Naive thymus-derived CD8-positive, alpha-beta T cell (primary cell): ENCODE measurements at regions of chr19 and their contacts with region 1.

Region 1: DNA sequence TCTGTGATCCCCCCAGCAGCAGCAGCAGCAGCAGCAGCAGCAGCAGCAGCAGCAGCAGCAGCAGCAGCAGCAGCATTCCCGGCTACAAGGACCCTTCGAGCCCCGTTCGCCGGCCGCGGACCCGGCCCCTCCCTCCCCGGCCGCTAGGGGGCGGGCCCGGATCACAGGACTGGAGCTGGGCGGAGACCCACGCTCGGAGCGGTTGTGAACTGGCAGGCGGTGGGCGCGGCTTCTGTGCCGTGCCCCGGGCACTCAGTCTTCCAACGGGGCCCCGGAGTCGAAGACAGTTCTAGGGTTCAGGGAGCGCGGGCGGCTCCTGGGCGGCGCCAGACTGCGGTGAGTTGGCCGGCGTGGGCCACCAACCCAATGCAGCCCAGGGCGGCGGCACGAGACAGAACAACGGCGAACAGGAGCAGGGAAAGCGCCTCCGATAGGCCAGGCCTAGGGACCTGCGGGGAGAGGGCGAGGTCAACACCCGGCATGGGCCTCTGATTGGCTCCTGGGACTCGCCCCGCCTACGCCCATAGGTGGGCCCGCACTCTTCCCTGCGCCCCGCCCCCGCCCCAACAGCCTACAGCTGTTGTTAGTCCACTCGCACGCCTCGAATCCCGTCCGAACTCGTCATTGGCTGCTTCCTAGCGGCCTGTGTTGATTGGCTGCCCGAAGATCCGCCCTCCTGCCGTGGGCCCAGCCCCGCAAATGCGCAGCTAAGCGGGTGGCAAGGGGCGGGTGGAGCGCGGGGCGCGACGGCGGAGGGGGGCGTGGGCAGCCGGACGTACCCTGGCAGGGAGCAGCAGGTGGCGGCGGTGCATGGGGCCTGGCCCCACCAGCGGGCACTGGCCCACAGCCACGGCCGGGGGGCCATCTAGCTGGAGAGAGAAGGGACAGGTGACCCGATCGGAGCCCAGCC is 1.4 kb upstream of the SIX5 start:
- DNase-seq: peak; percentile 85 to 96 (median 91)
- ATAC-seq: peak; percentile 76 to 82
- H3K4me3 Mint-ChIP-seq: peak overlapping the region; percentile 83 to 91 (median 87)
- H3K27ac Mint-ChIP-seq: peak overlapping the region in 9 of 10 donors; percentile 32 to 96 (median 90)
- H3K4me1 Mint-ChIP-seq: peaks cover 7 to 33% (median 13%) of the 10 kb centered on the region in 4 donors
- H3K27me3 Mint-ChIP-seq: peaks cover 0 to 17% (median 3%) of the 10 kb centered on the region in 5 donors

Region 2: GRCh38 chr19:45607071-45608029 is 163.1 kb before region 1 on chr19:
- POLR2A ChIA-PET with region 1: no interaction called
- DNase-seq: peak in 6 of 10 donors; percentile 22 to 37 (median 28)
- ATAC-seq: peak; percentile 22 to 54
- H3K4me3 Mint-ChIP-seq: peak overlapping the region in 3 of 10 donors; percentile 13 to 48 (median 20)
- H3K27ac Mint-ChIP-seq: peak overlapping the region in 4 of 10 donors; percentile 24 to 76 (median 46)
- H3K4me1 Mint-ChIP-seq: peaks cover 6 to 15% (median 11%) of the 10 kb centered on the region in 4 donors
- H3K27me3 Mint-ChIP-seq: peaks cover 7 to 19% (median 9%) of the 10 kb centered on the region in 5 donors

Region 3: GRCh38 chr19:45692187-45693105 is 78.0 kb before region 1 on chr19 and contains the start of gene QPCTL:
- POLR2A ChIA-PET with region 1: interaction called, 13 read pairs
- DNase-seq: peak; percentile 89 to 99 (median 98)
- ATAC-seq: peak; percentile 88 to 90
- H3K4me3 Mint-ChIP-seq: peak within 1 kb of the TSS; percentile 91 to 100 (median 96)
- H3K27ac Mint-ChIP-seq: peak within 1 kb of the TSS; percentile 89 to 99 (median 96)
- H3K4me1 Mint-ChIP-seq: peaks cover 9 to 34% (median 23%) of the 10 kb centered on the region in 4 donors
- H3K27me3 Mint-ChIP-seq: no peaks in the 10 kb centered on the region
- polyA plus RNA-seq, gene QPCTL: 0.65 to 2.3 (median 1.6) TPM

Region 4: GRCh38 chr19:45730389-45731288 is 39.8 kb before region 1 on chr19 and contains the start of gene FBXO46:
- POLR2A ChIA-PET with region 1: interaction called, 11 read pairs
- DNase-seq: peak; percentile 74 to 95 (median 90)
- ATAC-seq: peak; percentile 99 to 100
- H3K4me3 Mint-ChIP-seq: peak within 1 kb of the TSS; percentile 90 to 99 (median 94)
- H3K27ac Mint-ChIP-seq: peak within 1 kb of the TSS; percentile 84 to 96 (median 94)
- H3K4me1 Mint-ChIP-seq: peaks cover 20 to 46% (median 37%) of the 10 kb centered on the region in 4 donors
- H3K27me3 Mint-ChIP-seq: no peaks in the 10 kb centered on the region
- polyA plus RNA-seq, gene FBXO46: 12.4 to 15.2 (median 12.5) TPM

Region 5: DNA sequence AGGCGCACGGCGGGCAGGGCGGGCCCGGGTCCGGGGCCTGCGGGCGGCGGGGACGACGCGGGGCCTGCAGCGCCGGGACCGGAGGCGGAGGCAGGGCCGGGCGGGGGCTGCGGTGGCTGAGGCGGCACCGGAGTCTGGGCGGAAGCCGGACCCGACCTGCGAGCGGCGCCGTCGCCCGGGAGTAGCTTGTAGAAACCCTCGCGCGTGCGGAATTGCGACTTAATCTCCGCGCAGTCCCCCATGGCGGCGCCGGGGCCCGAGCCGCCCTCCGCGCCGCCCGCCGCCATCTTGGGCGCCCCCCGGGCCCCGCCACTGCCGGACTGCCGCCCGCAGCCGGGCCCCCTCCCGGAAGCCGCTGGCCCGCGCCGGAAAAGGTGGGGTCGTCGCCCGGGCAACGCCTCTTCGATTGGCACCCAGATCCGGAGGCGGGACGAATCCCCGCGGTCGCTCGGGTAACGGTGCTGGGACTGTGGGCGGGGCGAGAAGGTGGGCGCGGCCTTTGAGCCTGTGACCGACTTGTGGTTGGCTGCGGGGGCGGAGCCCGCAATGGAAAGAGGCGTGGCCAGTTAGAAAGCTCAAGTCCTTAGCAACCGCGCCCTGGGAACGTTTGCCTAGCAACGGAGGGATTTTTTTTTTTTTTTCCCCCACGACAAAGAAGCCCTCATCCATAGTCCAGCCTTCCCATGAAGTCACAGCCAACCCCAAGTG is 22.2 kb after region 1 on chr19 and contains the start of gene DMWD:
- POLR2A ChIA-PET with region 1: interaction called, 77 read pairs
- DNase-seq: peak; percentile 98 to 99 (median 99)
- ATAC-seq: peak; percentile 82 to 94
- H3K4me3 Mint-ChIP-seq: peak within 1 kb of the TSS; percentile 83 to 94 (median 90)
- H3K27ac Mint-ChIP-seq: peak within 1 kb of the TSS; percentile 45 to 95 (median 90)
- H3K4me1 Mint-ChIP-seq: peaks cover 34 to 44% (median 37%) of the 10 kb centered on the region in 4 donors
- H3K27me3 Mint-ChIP-seq: peaks cover 9 to 56% (median 33%) of the 10 kb centered on the region in 5 donors
- polyA plus RNA-seq, gene DMWD: 8.0 to 16.5 (median 11.9) TPM

Region 6: GRCh38 chr19:45798995-45799517 is 28.6 kb after region 1 on chr19:
- POLR2A ChIA-PET with region 1: interaction called, 77 read pairs
- DNase-seq: peak; percentile 40 to 76 (median 61)
- ATAC-seq: peak; percentile 96 to 97
- H3K4me3 Mint-ChIP-seq: no peak overlapping the region
- H3K27ac Mint-ChIP-seq: peak overlapping the region in 2 of 10 donors; percentile 10 to 12
- H3K4me1 Mint-ChIP-seq: peaks cover 7 to 10% (median 8%) of the 10 kb centered on the region in 4 donors
- H3K27me3 Mint-ChIP-seq: peaks cover 15 to 70% (median 35%) of the 10 kb centered on the region in 5 donors

Region 7: DNA sequence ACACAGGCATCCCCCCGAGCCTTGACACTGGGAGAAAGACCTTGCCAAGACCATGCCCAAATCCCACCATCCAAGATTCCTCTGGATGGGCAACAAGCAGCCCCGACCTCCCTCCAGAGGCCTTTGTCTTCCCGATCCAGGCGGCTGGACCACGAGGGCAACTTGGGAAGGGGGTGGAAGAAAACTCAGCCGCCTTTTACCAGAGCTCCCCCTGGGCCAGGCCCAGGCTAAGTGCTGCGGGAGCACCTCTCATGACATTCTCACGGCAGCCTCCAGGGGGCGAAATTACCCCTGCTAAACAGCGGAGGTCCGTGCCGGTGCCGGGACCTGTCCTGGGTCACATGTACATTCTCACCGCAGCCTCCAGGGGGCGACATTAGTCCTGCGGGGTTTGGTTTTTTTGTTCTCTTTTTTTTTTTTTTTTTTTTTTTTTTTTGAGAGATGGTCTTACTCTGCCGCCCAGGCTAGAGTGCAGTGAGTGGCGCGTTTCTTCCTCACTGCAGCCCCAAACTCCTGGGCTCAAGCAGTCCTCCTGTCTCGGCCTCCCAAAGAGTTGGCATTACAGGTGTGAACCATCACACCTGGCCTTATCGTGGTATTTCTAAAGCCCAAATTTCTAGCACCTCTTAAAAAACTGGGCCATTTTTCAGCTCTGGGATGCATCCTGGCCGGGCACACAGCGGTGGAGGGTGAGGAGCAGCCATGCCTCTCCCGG is 46.7 kb after region 1 on chr19:
- POLR2A ChIA-PET with region 1: interaction called, 16 read pairs
- DNase-seq: peak; percentile 90 to 96 (median 94)
- ATAC-seq: peak; percentile 95 to 99
- H3K4me3 Mint-ChIP-seq: peak overlapping the region in 9 of 10 donors; percentile 26 to 76 (median 42)
- H3K27ac Mint-ChIP-seq: peak overlapping the region in 6 of 10 donors; percentile 20 to 83 (median 55)
- H3K4me1 Mint-ChIP-seq: peaks cover 0 to 11% (median 6%) of the 10 kb centered on the region in 4 donors
- H3K27me3 Mint-ChIP-seq: peaks cover 1 to 22% (median 16%) of the 10 kb centered on the region in 5 donors

Region 8: GRCh38 chr19:45862564-45863334 is 92.3 kb after region 1 on chr19 and contains the start of gene SYMPK:
- POLR2A ChIA-PET with region 1: interaction called, 10 read pairs
- DNase-seq: peak; percentile 94 to 99 (median 98)
- ATAC-seq: peak; percentile 94 to 98
- H3K4me3 Mint-ChIP-seq: peak within 1 kb of the TSS; percentile 89 to 100 (median 96)
- H3K27ac Mint-ChIP-seq: peak within 1 kb of the TSS; percentile 78 to 99 (median 96)
- H3K4me1 Mint-ChIP-seq: peaks cover 17 to 43% (median 38%) of the 10 kb centered on the region in 4 donors
- H3K27me3 Mint-ChIP-seq: peaks cover 5 to 24% (median 20%) of the 10 kb centered on the region in 5 donors
- polyA plus RNA-seq, gene SYMPK: 4.4 to 15.4 (median 13.8) TPM